ENCODE measurements at regions of chr1 and their contacts with region 1.

Region 1: DNA sequence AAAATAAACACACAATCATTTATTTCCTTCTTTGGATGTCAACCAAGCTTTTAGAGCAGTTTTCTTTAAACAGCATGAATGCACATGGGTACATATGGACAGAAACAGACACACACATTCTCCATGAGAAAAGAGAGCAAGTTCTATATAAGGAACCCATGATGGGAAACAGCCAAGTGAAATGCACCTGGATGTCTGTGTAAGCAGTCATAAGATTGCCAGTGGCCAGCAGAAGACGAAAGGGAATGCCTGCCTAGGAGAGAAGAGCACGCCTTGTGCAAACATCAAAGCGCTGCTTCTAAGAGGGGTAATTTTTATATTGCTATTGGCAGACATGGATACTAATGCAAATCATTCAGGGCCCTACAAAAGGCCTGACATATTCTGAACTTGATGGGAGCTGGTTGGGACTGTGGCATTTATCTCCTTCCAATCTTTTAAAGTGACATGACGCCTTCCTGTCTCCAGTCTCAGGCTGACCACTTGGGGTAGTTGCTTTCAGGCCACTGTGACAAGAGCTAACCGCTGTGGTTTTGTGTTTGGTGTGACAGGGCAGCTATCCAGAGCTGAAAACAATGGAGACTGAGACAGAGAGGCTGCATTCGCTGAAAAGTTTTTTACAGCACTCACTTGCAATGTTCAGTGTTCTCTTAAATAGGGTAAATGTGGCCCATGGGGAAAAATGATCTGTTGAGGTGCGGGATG is 75.0 kb upstream of the DPT start:
- DNase-seq: no peak
- H3K4me3 ChIP-seq: no peak overlapping the region
- H3K4me3 Mint-ChIP-seq: peak overlapping the region; percentile 8
- H3K27ac Mint-ChIP-seq: peak overlapping the region; percentile 25
- H3K4me1 ChIP-seq: peaks cover 70% of the 10 kb centered on the region
- H3K4me1 Mint-ChIP-seq: peaks cover 47% of the 10 kb centered on the region
- H3K27me3 ChIP-seq: no peaks in the 10 kb centered on the region
- H3K27me3 Mint-ChIP-seq: no peaks in the 10 kb centered on the region
- CTCF ChIP-seq: no peak

Region 2: DNA sequence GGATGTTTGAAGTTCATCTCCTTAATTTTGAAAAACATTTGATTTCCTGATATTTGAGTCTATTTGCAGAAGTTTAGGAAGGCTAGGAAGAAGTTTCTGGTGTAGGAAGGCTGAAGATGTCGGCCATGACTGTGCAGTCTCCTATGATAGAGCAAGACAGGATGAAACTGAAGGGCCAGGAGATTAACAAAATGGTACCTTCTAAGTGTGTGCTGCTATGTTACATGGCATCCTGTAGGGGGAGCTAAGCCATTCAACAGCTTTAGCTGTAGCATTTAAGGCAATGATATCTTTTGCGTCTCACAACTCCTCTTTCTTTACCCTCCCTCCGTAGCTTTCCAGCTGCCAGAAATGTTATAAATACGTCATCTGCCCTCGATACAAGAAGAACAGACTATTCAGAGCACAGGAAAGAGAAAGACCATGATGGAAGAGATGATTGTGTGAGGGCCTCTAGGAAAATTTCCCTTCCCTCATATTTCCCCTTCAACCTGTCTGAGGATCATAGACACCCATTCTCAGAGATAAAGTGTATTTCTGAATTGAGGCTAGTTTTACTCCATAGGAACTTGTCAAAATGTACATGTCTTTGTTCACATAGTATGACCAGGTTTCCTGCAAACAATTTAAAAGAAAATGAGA is 166.5 kb before region 1 on chr1:
- CTCF ChIA-PET with region 1: no interaction called
- POLR2A ChIA-PET with region 1: no interaction called
- intact Hi-C with region 1: loop called (anchors 2 kb)
- DNase-seq: peak in 1 of 2 experiments; percentile 19
- H3K4me3 ChIP-seq: no peak overlapping the region
- H3K4me3 Mint-ChIP-seq: no peak overlapping the region
- H3K27ac Mint-ChIP-seq: no peak overlapping the region
- H3K4me1 ChIP-seq: peaks cover 8% of the 10 kb centered on the region; the same call in 1 of the 2 replicates
- H3K4me1 Mint-ChIP-seq: peaks cover 15% of the 10 kb centered on the region
- H3K27me3 ChIP-seq: no peaks in the 10 kb centered on the region
- H3K27me3 Mint-ChIP-seq: no peaks in the 10 kb centered on the region
- CTCF ChIP-seq: peak; percentile 34 to 52

Region 3: DNA sequence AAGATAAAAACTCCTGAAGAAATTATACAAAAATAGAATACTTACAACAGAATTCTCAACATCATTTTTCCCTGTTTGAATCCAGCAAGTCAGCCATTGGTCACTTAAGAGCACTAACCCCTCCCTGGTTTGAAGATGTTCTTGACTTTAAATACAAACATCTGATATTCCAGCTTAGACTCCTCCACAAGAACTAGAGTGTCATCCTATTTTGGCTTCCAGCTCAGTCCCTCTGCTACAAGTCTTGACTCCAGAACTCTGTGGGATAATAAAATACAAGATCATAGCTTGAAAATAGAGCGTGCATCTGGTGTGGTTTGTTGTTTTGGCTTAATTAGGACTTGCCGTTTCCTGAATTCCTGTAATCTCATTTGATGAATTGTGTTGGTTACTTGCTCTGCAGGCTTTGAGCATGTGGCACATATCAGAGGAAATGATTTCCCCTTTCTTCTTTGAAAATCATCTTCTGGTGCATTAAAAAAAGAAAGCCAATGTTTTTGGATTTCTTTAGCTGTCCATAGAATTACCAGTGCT is 11.3 kb before region 1 on chr1:
- CTCF ChIA-PET with region 1: no interaction called
- POLR2A ChIA-PET with region 1: no interaction called
- intact Hi-C with region 1: loop called (anchors 1 kb)
- DNase-seq: no peak
- H3K4me3 ChIP-seq: no peak overlapping the region
- H3K4me3 Mint-ChIP-seq: no peak overlapping the region
- H3K27ac Mint-ChIP-seq: no peak overlapping the region
- H3K4me1 ChIP-seq: peaks cover 31% of the 10 kb centered on the region
- H3K4me1 Mint-ChIP-seq: peaks cover 45% of the 10 kb centered on the region
- H3K27me3 ChIP-seq: no peaks in the 10 kb centered on the region
- H3K27me3 Mint-ChIP-seq: no peaks in the 10 kb centered on the region
- CTCF ChIP-seq: no peak

Region 4: GRCh38 chr1:168863772-168864171 is 59.8 kb after region 1 on chr1:
- CTCF ChIA-PET with region 1: no interaction called
- POLR2A ChIA-PET with region 1: no interaction called
- intact Hi-C with region 1: loop called (anchors 5 kb)
- DNase-seq: no peak
- H3K4me3 ChIP-seq: no peak overlapping the region
- H3K4me3 Mint-ChIP-seq: no peak overlapping the region
- H3K27ac Mint-ChIP-seq: peak overlapping the region; percentile 48
- H3K4me1 ChIP-seq: peaks cover 25% of the 10 kb centered on the region
- H3K4me1 Mint-ChIP-seq: peaks cover 29% of the 10 kb centered on the region
- H3K27me3 ChIP-seq: no peaks in the 10 kb centered on the region
- H3K27me3 Mint-ChIP-seq: no peaks in the 10 kb centered on the region
- CTCF ChIP-seq: no peak

Region 5: DNA sequence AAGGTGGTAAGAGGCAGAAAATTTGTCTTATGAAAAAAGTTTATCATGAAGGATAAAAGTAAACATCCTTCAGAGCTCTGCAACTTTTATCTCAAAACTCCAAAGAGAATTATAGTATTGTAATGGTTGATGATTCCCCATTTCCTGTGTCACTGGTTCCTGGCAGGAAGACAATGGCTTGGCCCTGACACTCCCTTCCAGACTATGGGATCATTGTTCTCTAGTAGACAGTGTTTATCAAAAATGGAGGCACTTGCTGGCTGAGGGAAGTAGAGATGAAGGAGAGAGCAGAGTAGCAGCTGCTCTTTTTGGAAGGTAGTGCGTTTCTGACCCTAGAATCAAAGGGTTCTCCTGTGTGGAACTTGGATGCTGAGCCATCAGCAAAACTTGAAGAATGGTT is 156.6 kb after region 1 on chr1:
- CTCF ChIA-PET with region 1: no interaction called
- POLR2A ChIA-PET with region 1: no interaction called
- intact Hi-C with region 1: loop called (anchors 5 kb)
- DNase-seq: peak in 1 of 2 experiments; percentile 7
- H3K4me3 ChIP-seq: no peak overlapping the region
- H3K4me3 Mint-ChIP-seq: no peak overlapping the region
- H3K27ac Mint-ChIP-seq: peak overlapping the region; percentile 52
- H3K4me1 ChIP-seq: peaks cover 18% of the 10 kb centered on the region
- H3K4me1 Mint-ChIP-seq: peaks cover 20% of the 10 kb centered on the region
- H3K27me3 ChIP-seq: no peaks in the 10 kb centered on the region
- H3K27me3 Mint-ChIP-seq: no peaks in the 10 kb centered on the region
- CTCF ChIP-seq: no peak